SK-N-SH (cell line): ENCODE measurements at regions of chr6 and their contacts with region 1.

Region 1: DNA sequence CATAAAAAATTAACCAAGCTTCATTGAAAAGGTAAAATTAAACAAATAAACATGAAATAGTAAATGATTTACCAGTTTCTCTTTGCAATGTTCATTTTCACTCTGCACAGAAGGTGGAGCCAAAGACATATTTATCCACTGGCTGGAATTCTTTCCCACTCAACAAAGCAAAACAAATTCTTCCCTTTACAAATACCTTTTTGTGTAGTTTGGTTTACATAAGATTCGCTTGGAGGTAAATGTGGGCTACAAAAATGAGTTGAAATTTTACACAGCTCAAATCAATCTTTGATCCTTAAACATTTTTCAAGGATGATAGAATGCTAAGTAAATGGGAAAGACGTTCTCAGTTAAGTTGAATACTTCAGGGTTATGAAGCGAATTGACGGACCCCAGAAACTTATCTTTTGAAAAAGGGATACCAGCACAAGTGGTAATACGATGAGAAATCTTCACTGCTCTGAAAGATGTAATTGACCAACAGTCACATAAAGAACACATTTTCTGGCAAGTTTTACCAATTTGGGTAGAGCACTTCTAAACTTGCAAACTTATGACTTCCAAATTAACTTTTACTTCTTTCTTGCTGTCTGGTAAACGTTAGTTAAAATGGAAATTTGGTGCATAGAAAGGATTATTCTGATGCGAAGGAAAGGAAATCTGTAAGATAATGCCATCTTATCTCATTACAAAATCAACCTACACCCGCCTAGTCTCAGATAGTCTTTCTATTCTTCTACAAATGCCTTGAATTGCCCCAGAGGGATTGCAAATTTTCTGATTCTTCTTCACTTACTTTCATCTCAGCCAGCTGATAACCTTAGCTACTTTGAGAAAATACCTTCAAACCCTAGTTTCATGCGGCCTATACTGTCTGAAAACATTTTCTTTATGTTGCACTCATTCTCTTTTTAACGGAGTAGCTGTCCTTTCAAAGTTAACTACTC is 4.7 kb upstream of the GJA1 start:
- DNase-seq: peak; percentile 50
- H3K4me3 ChIP-seq: no peak overlapping the region
- H3K27ac ChIP-seq: no peak overlapping the region
- H3K4me1 ChIP-seq: peaks cover 0 to 16% of the 10 kb centered on the region in 2 experiments; a peak in 2 of 4 replicates
- H3K27me3 ChIP-seq: no peaks in the 10 kb centered on the region
- CTCF ChIP-seq: peak; percentile 90
- EP300 ChIP-seq: no peak
- RAD21 ChIP-seq: peak; percentile 97

Region 2: DNA sequence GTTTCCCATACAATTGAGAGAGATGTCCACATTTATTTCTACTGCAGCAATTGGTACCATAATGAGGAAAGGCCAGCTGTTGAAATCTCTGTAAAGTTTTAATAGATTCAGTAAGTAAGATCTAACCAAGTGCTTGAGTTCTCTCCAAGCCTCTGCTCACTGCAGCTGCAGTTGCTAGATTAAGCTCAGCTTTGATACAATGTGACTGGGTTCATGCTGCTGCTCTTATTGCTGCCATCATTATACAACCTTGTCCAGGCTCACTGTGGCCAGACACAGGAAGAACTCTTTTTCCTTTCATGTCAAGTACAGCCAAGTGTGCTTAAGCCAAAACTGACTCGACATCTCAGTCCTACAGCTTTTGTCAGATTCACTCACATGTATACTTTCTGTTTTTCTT is 428.2 kb after region 1 on chr6:
- CTCF ChIA-PET with region 1: interaction called, 14 read pairs
- POLR2A ChIA-PET with region 1: no interaction called
- DNase-seq: no peak
- H3K4me3 ChIP-seq: no peak overlapping the region
- H3K27ac ChIP-seq: no peak overlapping the region
- H3K4me1 ChIP-seq: peaks cover 0 to 10% of the 10 kb centered on the region in 2 experiments; a peak in 2 of 4 replicates
- H3K27me3 ChIP-seq: no peaks in the 10 kb centered on the region
- CTCF ChIP-seq: no peak
- EP300 ChIP-seq: no peak
- RAD21 ChIP-seq: no peak

Region 3: GRCh38 chr6:122184401-122184827 is 753.6 kb after region 1 on chr6:
- CTCF ChIA-PET with region 1: interaction called, 13 read pairs
- POLR2A ChIA-PET with region 1: no interaction called
- DNase-seq: peak; percentile 22
- H3K4me3 ChIP-seq: no peak overlapping the region
- H3K27ac ChIP-seq: no peak overlapping the region
- H3K4me1 ChIP-seq: no peaks in the 10 kb centered on the region
- H3K27me3 ChIP-seq: no peaks in the 10 kb centered on the region
- CTCF ChIP-seq: peak; percentile 65
- EP300 ChIP-seq: no peak
- RAD21 ChIP-seq: peak; percentile 71